AG04449 (cell line): ENCODE measurements at regions of chr1 and their contacts with region 1.

Region 1: GRCh38 chr1:33295450-33296081 is 25.3 kb downstream of the A3GALT2 start:
- DNase-seq: no peak
- H3K4me3 ChIP-seq: no peak overlapping the region
- CTCF ChIP-seq: peak; percentile 94

Region 2: DNA sequence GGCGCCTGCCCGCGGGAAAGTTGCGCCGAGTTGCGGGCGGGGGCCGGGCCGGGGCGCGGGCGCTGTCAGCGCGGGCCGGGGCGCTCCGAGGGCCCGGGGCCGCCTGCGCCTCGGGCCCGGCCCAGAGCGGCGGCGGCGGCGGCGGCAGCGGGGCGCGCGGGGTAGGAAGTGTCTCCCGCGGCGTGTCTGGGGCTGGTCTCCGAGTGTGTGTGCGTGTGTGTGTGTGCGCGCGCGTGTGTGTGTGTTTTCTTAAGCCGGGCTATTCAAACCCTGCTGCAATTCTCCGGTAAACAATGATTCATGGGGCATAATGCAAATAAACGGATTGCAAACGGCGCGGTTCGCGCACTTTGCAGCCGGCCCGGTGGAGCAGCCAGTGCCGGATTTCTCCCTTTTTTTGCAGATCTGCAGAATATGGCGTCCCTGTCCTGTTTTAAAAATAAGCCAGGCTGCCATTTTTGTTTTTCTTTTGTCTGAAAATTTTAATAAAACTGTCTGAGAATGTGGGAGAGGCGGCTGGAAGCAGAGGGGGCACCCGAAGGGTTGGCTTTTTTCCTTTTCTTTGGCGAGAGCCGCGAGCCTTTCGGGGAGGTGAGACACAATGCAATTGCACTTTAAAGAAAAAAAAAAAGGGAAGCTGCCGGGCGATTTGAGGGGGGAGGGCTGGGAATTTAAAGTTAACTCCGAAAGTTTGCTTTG is 38.7 kb before region 1 on chr1:
- CTCF ChIA-PET with region 1: interaction called, 12 read pairs
- POLR2A ChIA-PET with region 1: no interaction called
- DNase-seq: no peak
- H3K4me3 ChIP-seq: peak overlapping the region; percentile 76
- CTCF ChIP-seq: no peak

Region 3: GRCh38 chr1:33306648-33307493 is 11.3 kb after region 1 on chr1:
- CTCF ChIA-PET with region 1: interaction called, 39 read pairs
- POLR2A ChIA-PET with region 1: no interaction called
- DNase-seq: no peak
- H3K4me3 ChIP-seq: peak overlapping the region; percentile 18
- CTCF ChIP-seq: no peak

Region 4: GRCh38 chr1:33342041-33342723 is 46.6 kb after region 1 on chr1:
- CTCF ChIA-PET with region 1: interaction called, 44 read pairs
- POLR2A ChIA-PET with region 1: no interaction called
- DNase-seq: peak; percentile 91
- H3K4me3 ChIP-seq: peak overlapping the region; percentile 9; the same call in 1 of the 2 replicates
- CTCF ChIP-seq: no peak

Region 5: DNA sequence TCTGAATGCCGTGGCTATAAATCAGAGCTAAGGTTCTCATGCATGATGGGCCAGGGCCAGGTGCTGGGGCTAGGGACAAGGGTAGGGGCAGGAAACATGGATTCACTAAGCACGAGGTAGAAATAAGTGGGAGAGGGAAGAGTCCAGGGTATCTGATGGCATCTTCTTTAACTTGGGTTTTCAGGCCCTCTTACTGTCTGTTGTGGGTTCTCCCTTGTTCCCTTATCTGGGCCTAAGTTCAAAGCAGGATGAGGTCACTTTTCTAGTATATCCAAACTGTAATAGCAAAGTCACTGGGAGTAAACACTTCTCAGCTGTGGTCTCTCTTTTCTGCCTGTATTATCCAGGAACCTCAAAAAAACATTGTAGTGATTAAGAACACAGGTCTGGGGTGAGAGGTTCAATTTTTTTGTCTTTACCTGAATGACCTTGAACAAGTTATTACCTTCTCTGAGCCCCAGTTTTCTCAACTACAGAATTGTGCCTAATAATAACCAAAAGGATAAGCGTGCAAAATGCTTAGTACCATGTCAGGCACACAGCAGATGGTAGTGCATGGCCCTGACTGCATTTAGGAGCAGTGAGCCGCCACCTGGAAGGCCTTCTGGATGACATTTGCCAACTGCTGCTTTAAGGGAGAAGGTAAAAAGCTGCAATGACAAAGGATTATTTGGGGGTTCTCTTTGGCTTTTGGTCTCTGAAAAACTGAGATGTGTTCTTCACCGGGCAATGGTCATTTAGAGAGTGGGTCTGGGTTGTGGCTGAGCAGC is 79.0 kb after region 1 on chr1:
- CTCF ChIA-PET with region 1: interaction called, 203 read pairs
- POLR2A ChIA-PET with region 1: no interaction called
- DNase-seq: no peak
- H3K4me3 ChIP-seq: no peak overlapping the region
- CTCF ChIP-seq: no peak

Region 6: DNA sequence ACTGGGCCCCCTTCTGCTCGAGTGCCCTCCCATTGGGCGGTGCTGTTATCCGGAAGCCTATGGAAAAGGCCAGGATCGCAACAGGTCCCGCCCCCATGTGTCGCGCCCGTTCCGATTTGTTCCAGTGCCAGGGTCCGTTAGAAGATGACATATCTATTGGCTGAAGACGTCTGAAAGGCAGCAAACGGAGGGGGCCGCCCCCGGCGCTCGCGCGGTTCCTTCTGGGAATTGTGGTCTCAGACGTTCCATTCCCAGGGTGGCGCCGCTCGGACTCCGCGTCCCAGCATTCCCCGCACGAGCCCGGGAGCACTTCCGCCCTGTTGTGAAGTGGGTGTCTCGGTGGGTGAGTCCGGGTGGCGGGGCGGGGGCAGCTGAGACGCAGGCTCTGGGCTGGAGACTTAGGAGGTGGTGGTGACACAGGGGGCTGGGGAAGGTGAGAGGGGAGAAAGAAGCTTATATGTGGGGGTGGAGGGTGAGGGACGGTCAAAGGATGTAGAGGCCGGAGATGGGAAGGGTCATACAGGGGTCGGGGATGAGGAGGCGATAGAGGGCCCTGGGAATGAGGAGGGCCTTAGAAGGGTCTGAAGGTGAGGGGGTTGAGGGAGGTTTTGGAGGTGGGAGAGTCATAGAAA is 176.9 kb after region 1 on chr1 and contains the start of gene ZSCAN20:
- CTCF ChIA-PET with region 1: interaction called, 436 read pairs
- POLR2A ChIA-PET with region 1: no interaction called
- DNase-seq: peak; percentile 88
- H3K4me3 ChIP-seq: peak within 1 kb of the TSS; percentile 91
- CTCF ChIP-seq: no peak